ENCODE measurements at regions of chr19 and their contacts with region 1.

Region 1: GRCh38 chr19:31350701-31351068 is 1.4 kb upstream of the TSHZ3 start:
- DNase-seq: no peak
- H3K4me3 ChIP-seq: peak overlapping the region; percentile 67
- H3K27ac ChIP-seq: peak overlapping the region; percentile 67
- H3K4me1 ChIP-seq: no peaks in the 10 kb centered on the region
- H3K27me3 ChIP-seq: peaks cover 68% of the 10 kb centered on the region
- CTCF ChIP-seq: no peak

Region 2: DNA sequence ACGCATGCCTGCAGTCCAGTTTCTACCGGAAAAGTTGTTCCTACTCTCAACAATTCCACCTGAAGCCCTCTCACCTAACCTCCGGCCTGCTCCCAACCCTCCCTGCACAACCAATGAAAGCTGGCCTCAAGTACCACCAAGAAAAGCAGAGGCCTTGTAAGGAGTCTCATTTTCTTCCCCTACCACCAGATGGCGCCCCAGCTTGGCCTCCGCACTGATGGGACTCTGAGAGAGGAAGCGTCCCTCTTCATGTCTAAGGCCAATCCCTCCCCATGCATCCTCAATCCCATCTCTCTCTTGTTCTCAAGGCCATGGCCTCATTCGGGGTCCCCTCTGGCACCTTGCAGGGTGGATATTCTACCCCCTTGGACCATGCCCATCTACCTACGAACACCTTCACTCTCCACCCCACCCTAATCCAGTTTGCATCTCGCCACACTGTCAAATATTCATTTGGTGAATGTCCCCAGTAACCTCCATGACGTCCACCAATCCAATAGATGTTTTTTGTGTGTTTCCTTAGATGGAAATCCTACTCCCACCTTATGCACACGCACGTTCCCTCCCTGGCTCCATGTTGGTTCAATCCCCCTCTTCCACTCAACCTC is 565.7 kb before region 1 on chr19:
- intact Hi-C with region 1: loop called (anchors 10 kb)
- DNase-seq: peak; percentile 63
- H3K4me3 ChIP-seq: no peak overlapping the region
- H3K27ac ChIP-seq: no peak overlapping the region
- H3K4me1 ChIP-seq: no peaks in the 10 kb centered on the region
- H3K27me3 ChIP-seq: no peaks in the 10 kb centered on the region
- CTCF ChIP-seq: peak; percentile 57

Region 3: GRCh38 chr19:31041461-31041860 is 309.2 kb before region 1 on chr19:
- intact Hi-C with region 1: loop called (anchors 10 kb)
- DNase-seq: no peak
- H3K4me3 ChIP-seq: no peak overlapping the region
- H3K27ac ChIP-seq: no peak overlapping the region
- H3K4me1 ChIP-seq: no peaks in the 10 kb centered on the region
- H3K27me3 ChIP-seq: no peaks in the 10 kb centered on the region
- CTCF ChIP-seq: no peak

Region 4: DNA sequence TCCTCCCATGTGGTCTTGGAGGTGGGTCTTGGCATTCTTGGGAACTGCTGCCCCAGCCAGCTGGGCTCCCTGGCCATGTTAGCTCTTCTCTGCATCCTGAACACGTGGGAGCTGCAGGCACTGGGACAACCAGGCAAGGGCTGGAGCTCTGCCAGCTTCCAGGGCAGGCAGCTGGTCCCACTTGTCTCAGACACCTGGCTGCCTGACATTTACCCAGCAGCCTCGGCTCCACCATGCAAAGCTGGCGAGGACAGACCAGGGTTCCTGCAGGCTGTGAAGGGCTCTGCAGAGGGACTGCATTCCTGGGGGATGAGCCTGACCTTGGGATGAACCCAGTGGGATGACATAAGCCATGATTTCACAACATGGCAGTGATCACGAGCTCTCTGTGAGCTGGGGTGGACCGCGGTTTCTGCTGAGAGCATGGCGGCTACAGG is 97.6 kb after region 1 on chr19:
- intact Hi-C with region 1: no loop called
- DNase-seq: peak; percentile 36
- H3K4me3 ChIP-seq: no peak overlapping the region
- H3K27ac ChIP-seq: no peak overlapping the region
- H3K4me1 ChIP-seq: no peaks in the 10 kb centered on the region
- H3K27me3 ChIP-seq: no peaks in the 10 kb centered on the region
- CTCF ChIP-seq: no peak